HepG2 (cell line): ENCODE measurements at regions of chr12 and their contacts with region 1.

Region 1: DNA sequence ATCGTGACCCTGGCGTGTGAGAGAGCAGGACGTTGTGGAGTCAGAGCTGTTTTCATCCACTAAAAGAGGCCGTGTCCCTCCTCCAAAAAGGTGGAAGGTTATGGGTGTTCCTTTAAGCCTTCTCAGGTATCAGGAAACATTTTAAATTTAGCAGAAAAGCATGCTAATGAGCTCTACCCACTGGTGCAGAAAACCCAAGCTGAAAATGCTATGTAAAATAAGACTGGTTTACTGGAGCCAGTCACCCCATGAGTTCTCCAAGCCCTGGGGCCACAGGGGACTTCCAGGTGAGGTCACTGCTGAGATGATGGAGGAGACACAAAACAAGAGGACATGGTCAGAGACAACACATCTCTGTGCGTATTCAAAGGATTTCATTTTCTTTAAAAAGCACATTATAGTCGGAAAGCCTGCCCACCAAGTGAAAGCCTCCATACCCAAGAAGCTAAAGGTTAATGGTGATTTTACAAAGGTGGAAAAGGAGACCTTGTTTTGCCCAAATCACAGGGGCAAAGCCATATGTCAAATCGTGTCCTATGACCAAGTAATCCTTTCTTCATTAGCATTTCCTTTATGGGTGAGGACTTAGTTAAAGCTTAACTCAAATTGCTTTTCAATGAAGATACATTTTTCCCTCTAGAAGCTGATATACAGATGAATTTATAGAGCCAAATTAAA is 14.2 kb downstream of the PRKAB1 start:
- DNase-seq: no peak
- ATAC-seq: no peak
- H3K4me3 ChIP-seq: no peak overlapping the region
- H3K27ac ChIP-seq: peak overlapping the region; percentile 55
- H3K4me1 ChIP-seq: peaks cover 89% of the 10 kb centered on the region
- H3K27me3 ChIP-seq: no peaks in the 10 kb centered on the region
- CTCF ChIP-seq: no peak
- EP300 ChIP-seq: no peak
- POLR2A ChIP-seq: no peak
- RAD21 ChIP-seq: no peak

Region 2: GRCh38 chr12:119667577-119668323 is 14.3 kb before region 1 on chr12 and contains the start of gene PRKAB1:
- CTCF ChIA-PET with region 1: no interaction called
- POLR2A ChIA-PET with region 1: interaction called, 40 read pairs
- in situ Hi-C with region 1: no loop called
- intact Hi-C with region 1: no loop called
- DNase-seq: peak; percentile 96
- ATAC-seq: peak; percentile 94
- H3K4me3 ChIP-seq: peak within 1 kb of the TSS; percentile 88 to 91 (median 89)
- H3K27ac ChIP-seq: peak within 1 kb of the TSS; percentile 90
- H3K4me1 ChIP-seq: peaks cover 43% of the 10 kb centered on the region
- H3K27me3 ChIP-seq: no peaks in the 10 kb centered on the region; a peak in 1 of 5 replicates
- CTCF ChIP-seq: peak; percentile 89
- EP300 ChIP-seq: no peak
- POLR2A ChIP-seq: peak; percentile 77 to 80
- RAD21 ChIP-seq: peak; percentile 62; the same call in 1 of the 2 replicates
- total RNA-seq, gene PRKAB1: 25.4 and 28.4 TPM in 2 replicates